Prostate gland (tissue), 2 donors: ENCODE measurements at regions of chr11 and their contacts with region 1.

Region 1: GRCh38 chr11:4072668-4073285 is 21.8 kb upstream of the RRM1 start:
- DNase-seq: peak; percentile 72
- H3K4me3 ChIP-seq: no peak overlapping the region
- H3K27ac ChIP-seq: peak overlapping the region in 1 of 2 donors; percentile 24
- H3K4me1 ChIP-seq: no peaks in the 10 kb centered on the region
- H3K27me3 ChIP-seq: no peaks in the 10 kb centered on the region
- CTCF ChIP-seq: peak; percentile 53 to 94 (median 85)
- POLR2A ChIP-seq: no peak

Region 2: GRCh38 chr11:3854977-3855807 is 217.6 kb before region 1 on chr11 and contains the start of gene STIM1:
- intact Hi-C with region 1: loop called (anchors 2 kb)
- DNase-seq: peak; percentile 92
- H3K4me3 ChIP-seq: peak within 1 kb of the TSS; percentile 92 to 97
- H3K27ac ChIP-seq: peak within 1 kb of the TSS; percentile 97 to 98
- H3K4me1 ChIP-seq: peaks cover 12% of the 10 kb centered on the region
- H3K27me3 ChIP-seq: no peaks in the 10 kb centered on the region
- CTCF ChIP-seq: peak; percentile 94 to 99 (median 98)
- POLR2A ChIP-seq: peak; percentile 72
- total RNA-seq, gene STIM1: 34.1 to 65.0 TPM

Region 3: GRCh38 chr11:3929649-3930048 is 143.1 kb before region 1 on chr11:
- intact Hi-C with region 1: no loop called
- DNase-seq: no peak
- H3K4me3 ChIP-seq: no peak overlapping the region
- H3K27ac ChIP-seq: no peak overlapping the region
- H3K4me1 ChIP-seq: no peaks in the 10 kb centered on the region
- H3K27me3 ChIP-seq: no peaks in the 10 kb centered on the region
- CTCF ChIP-seq: no peak
- POLR2A ChIP-seq: no peak